ENCODE measurements at regions of chr15 and their contacts with region 1.

Region 1: GRCh38 chr15:47196057-47196456 is 521.2 kb upstream of the SEMA6D start:
- DNase-seq: peak; percentile 48
- ATAC-seq: peak; percentile 98
- H3K4me3 ChIP-seq: no peak overlapping the region
- H3K27ac ChIP-seq: no peak overlapping the region
- H3K4me1 ChIP-seq: no peaks in the 10 kb centered on the region
- H3K27me3 ChIP-seq: no peaks in the 10 kb centered on the region; a peak in 1 of 5 replicates
- CTCF ChIP-seq: peak; percentile 91
- EP300 ChIP-seq: no peak
- POLR2A ChIP-seq: no peak
- RAD21 ChIP-seq: peak; percentile 50; the same call in 1 of the 2 replicates

Region 2: DNA sequence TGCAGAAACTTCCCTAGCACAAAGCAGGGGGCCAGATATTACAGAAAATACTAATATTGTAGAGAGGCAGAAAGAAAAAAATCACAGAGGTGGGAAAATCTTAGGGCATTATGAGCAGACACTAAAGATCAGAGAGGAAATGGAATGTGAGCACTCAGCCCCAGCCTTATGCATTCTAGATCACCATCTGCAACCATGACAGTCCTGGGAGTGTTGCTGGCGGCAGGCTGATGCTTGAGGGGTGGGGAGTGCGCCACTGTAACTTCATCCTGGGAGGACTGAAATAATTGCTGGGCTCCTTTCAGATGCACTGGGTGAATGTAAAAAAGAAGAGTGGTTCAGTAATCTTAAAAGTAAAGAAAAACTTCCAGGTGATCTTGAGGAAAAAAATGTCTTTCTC is 93.6 kb after region 1 on chr15:
- CTCF ChIA-PET with region 1: no interaction called
- POLR2A ChIA-PET with region 1: no interaction called
- in situ Hi-C with region 1: no loop called
- intact Hi-C with region 1: no loop called
- DNase-seq: no peak
- ATAC-seq: no peak
- H3K4me3 ChIP-seq: no peak overlapping the region
- H3K27ac ChIP-seq: no peak overlapping the region
- H3K4me1 ChIP-seq: no peaks in the 10 kb centered on the region
- H3K27me3 ChIP-seq: no peaks in the 10 kb centered on the region
- CTCF ChIP-seq: no peak
- EP300 ChIP-seq: no peak
- POLR2A ChIP-seq: no peak
- RAD21 ChIP-seq: no peak

Region 3: GRCh38 chr15:47688573-47689086 is 492.6 kb after region 1 on chr15:
- CTCF ChIA-PET with region 1: no interaction called
- POLR2A ChIA-PET with region 1: no interaction called
- in situ Hi-C with region 1: no loop called
- intact Hi-C with region 1: loop called (anchors 10 kb)
- DNase-seq: no peak
- ATAC-seq: no peak
- H3K4me3 ChIP-seq: no peak overlapping the region
- H3K27ac ChIP-seq: no peak overlapping the region
- H3K4me1 ChIP-seq: no peaks in the 10 kb centered on the region
- H3K27me3 ChIP-seq: no peaks in the 10 kb centered on the region
- CTCF ChIP-seq: no peak
- EP300 ChIP-seq: no peak
- POLR2A ChIP-seq: no peak
- RAD21 ChIP-seq: no peak

Region 4: DNA sequence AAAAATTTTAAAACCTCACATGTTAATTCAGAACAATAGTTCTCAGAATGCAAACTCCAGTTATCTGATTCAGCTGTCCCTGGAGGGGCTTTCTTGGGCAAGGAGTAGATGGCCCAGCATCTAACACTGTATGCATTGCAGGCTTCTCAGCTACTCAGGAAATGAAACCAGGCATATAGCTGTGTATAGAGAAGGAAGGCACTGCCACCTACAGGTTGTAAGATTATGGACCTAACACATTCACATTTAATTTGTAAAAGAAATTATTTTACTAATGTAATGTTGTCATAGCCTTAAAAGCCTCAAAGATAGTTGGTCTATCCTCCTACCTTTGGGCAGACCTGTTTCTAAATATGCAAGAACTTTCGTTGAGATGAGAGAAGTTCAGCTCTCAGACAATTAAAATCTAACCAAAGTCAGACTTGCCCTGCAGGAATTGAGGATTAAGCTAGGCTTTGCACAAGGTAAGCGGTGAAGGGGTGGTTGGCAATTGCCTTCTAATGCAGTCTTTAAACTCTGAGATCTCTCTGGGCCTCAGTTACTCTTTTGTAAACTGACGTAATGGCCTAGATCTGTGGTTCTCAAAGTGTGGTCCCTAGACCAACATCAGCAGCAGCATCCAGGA is 792.0 kb after region 1 on chr15:
- CTCF ChIA-PET with region 1: interaction called, 35 read pairs
- POLR2A ChIA-PET with region 1: interaction called, 3 read pairs
- in situ Hi-C with region 1: loop called (anchors 5 kb)
- intact Hi-C with region 1: loop called (anchors 1 kb)
- DNase-seq: peak; percentile 35
- ATAC-seq: peak; percentile 90
- H3K4me3 ChIP-seq: no peak overlapping the region
- H3K27ac ChIP-seq: no peak overlapping the region
- H3K4me1 ChIP-seq: no peaks in the 10 kb centered on the region
- H3K27me3 ChIP-seq: no peaks in the 10 kb centered on the region
- CTCF ChIP-seq: peak; percentile 60
- EP300 ChIP-seq: no peak
- POLR2A ChIP-seq: no peak
- RAD21 ChIP-seq: no peak; the same call in 1 of the 2 replicates

Region 5: DNA sequence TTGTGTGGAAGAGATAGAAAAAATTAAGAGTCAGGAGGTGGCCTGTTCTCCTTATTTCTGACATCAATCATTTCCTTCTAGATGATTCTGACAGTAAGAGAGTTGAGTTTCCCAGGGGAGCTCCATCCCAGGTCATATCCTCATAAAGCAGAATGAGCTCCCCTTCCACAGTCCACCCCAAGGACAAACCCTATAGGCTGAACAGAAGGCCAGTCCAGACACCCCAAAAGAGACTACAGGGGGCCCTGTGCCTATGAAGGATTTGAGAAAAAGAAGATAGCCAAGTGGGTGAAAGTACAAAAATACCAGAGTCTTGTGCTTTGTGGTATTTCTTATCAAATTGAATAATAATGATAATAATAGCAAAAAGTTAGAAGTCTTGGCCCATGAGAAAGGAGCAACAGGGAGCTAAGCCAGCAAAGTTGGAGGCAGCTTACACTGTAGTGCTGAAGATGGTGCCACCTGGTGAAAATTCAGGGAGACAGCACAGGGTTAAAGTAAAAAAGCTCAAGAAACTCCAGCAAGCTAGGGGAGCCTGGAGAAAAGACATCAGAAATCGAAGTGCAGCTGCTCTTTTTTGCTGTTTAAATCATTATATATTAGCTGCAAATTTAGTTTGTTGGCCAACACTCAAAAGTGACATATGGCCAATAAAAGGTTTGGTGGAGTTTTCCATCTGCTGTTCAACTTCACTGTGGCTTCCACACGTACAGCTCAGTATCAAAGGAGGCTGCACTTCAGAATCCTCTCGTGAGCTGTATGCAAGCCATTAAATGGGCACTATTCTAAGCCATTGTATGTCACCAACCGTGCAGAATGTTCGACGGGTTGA is 888.9 kb after region 1 on chr15:
- CTCF ChIA-PET with region 1: no interaction called
- POLR2A ChIA-PET with region 1: no interaction called
- in situ Hi-C with region 1: loop called (anchors 10 kb)
- intact Hi-C with region 1: loop called (anchors 1 kb)
- DNase-seq: peak; percentile 26
- ATAC-seq: peak; percentile 73
- H3K4me3 ChIP-seq: no peak overlapping the region
- H3K27ac ChIP-seq: no peak overlapping the region
- H3K4me1 ChIP-seq: no peaks in the 10 kb centered on the region
- H3K27me3 ChIP-seq: 0 out of 5 replicates have a peak, but pooled peaks cover 0 to 3% of the 10 kb centered on the region in 2 experiments
- CTCF ChIP-seq: peak; percentile 42
- EP300 ChIP-seq: no peak
- POLR2A ChIP-seq: no peak
- RAD21 ChIP-seq: no peak

Region 6: DNA sequence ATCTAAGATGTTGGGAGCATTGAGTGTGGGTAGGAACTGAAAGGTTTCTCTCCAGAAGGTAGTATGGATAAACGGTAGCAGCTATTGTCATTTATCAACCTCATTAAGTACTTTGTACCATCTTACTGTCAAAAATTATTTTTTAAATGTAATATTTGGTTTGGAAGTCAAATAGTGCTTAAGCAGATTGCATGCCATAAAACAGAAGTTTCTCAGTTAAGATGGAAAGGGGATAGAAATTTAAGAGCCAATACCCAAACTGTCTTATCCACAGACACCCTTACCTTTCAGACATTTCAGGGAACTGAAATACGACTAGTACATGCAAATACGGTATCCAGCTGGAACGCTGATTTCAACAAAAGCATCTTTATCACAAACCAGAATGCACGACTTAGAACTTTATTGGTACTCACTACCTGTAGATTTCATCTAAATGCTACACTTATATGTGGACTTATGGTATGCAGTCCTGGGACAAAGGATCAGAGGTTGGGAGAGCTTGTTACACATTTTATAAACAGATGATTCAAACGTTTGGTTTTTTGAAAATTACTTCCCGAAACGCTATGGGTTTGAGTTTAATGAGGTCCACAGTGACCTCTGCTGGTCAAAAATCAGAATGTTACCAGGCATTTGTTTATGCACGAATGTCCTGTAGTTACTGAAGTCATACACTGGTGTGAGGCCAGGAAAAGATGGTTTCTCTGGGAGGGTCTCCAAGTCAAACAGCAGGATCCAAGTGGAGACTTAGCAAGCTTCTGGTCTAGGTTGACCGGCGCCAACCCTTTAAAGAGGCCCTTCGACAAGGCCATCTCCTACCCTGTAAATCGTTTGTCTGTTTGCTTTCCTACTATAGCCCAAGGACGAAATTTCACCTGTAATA is 1089.5 kb after region 1 on chr15:
- CTCF ChIA-PET with region 1: interaction called, 6 read pairs
- POLR2A ChIA-PET with region 1: no interaction called
- in situ Hi-C with region 1: loop called (anchors 25 kb)
- intact Hi-C with region 1: no loop called
- DNase-seq: peak; percentile 58
- ATAC-seq: peak; percentile 83
- H3K4me3 ChIP-seq: no peak overlapping the region
- H3K27ac ChIP-seq: no peak overlapping the region
- H3K4me1 ChIP-seq: no peaks in the 10 kb centered on the region
- H3K27me3 ChIP-seq: no peaks in the 10 kb centered on the region
- CTCF ChIP-seq: peak; percentile 70
- EP300 ChIP-seq: no peak
- POLR2A ChIP-seq: no peak
- RAD21 ChIP-seq: no peak